ENCODE measurements at regions of chr5 and their contacts with region 1.

Region 1: GRCh38 chr5:35926389-35927051 is 11.9 kb downstream of the CAPSL start:
- DNase-seq: peak; percentile 84
- ATAC-seq: peak; percentile 61
- H3K4me3 ChIP-seq: peak overlapping the region; percentile 57
- H3K27ac ChIP-seq: no peak overlapping the region
- H3K4me1 ChIP-seq: peaks cover 30% of the 10 kb centered on the region
- H3K27me3 ChIP-seq: peaks cover 9% of the 10 kb centered on the region
- CTCF ChIP-seq: peak; percentile 97

Region 2: GRCh38 chr5:35213611-35214010 is 712.9 kb before region 1 on chr5:
- CTCF ChIA-PET with region 1: no interaction called
- POLR2A ChIA-PET with region 1: no interaction called
- intact Hi-C with region 1: no loop called
- DNase-seq: peak; percentile 85
- ATAC-seq: peak; percentile 60
- H3K4me3 ChIP-seq: no peak overlapping the region
- H3K27ac ChIP-seq: peak overlapping the region; percentile 73
- H3K4me1 ChIP-seq: peaks cover 20% of the 10 kb centered on the region
- H3K27me3 ChIP-seq: peaks cover 25% of the 10 kb centered on the region
- CTCF ChIP-seq: peak; percentile 66

Region 3: GRCh38 chr5:35478856-35479682 is 447.5 kb before region 1 on chr5:
- CTCF ChIA-PET with region 1: no interaction called
- POLR2A ChIA-PET with region 1: no interaction called
- intact Hi-C with region 1: loop called (anchors 1 kb)
- DNase-seq: peak; percentile 36
- ATAC-seq: peak; percentile 73
- H3K4me3 ChIP-seq: peak overlapping the region; percentile 70
- H3K27ac ChIP-seq: no peak overlapping the region
- H3K4me1 ChIP-seq: no peaks in the 10 kb centered on the region; the same call in 1 of the 2 replicates
- H3K27me3 ChIP-seq: peaks cover 18% of the 10 kb centered on the region
- CTCF ChIP-seq: no peak

Region 4: DNA sequence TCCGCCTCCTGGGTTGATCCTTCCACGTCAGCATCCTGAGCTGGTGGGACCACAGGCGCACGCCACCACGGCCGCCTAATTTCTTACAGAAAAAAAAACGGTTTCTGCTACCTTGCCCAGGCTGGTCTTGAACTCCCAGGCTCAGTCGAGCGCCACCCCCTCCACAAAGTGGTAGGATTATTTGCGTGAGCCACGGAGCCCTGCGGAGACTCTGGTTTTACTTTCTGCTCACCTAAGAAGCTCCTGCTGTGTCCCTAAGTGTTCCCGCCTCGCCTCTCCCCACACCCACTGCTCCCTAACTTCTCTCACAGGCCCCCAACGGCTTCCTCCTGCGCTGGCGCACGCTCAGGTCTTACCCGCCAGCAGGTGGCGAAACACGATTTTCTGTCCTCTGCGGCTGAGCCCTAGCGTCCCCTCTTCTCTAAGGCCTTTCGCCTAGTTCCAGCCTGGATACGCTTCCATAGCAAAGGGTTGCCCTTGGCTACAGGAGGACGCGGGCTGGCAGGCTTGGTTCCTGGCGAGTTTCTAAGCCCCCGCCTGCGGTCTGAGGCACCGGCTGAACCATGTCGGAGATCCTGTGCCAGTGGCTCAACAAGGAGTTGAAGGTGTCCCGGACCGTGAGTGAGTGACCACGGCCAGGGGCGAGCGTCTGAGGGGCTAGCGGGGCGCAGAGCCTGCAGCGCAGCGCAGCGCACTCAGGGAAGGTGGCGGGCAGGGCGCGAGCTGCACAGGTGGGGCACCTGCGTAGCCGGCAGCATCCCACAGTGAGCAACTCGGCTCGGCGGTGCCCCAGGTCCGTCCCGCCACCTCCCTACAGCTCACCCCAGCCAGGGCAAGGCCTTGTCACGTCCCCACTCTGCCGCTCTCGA is 308.9 kb before region 1 on chr5 and contains the start of gene SPEF2:
- CTCF ChIA-PET with region 1: interaction called, 3 read pairs
- POLR2A ChIA-PET with region 1: interaction called, 5 read pairs
- intact Hi-C with region 1: loop called (anchors 1 kb)
- DNase-seq: peak; percentile 92
- ATAC-seq: peak; percentile 98
- H3K4me3 ChIP-seq: peak within 1 kb of the TSS; percentile 92
- H3K27ac ChIP-seq: no peak within 1 kb of the TSS
- H3K4me1 ChIP-seq: peaks cover 9% of the 10 kb centered on the region
- H3K27me3 ChIP-seq: no peaks in the 10 kb centered on the region
- CTCF ChIP-seq: peak; percentile 91
- total RNA-seq, gene SPEF2: 2.3 and 2.7 TPM in 2 replicates

Region 5: GRCh38 chr5:35717718-35718117 is 208.8 kb before region 1 on chr5:
- CTCF ChIA-PET with region 1: no interaction called
- POLR2A ChIA-PET with region 1: no interaction called
- intact Hi-C with region 1: loop called (anchors 1 kb)
- DNase-seq: no peak
- ATAC-seq: no peak
- H3K4me3 ChIP-seq: no peak overlapping the region
- H3K27ac ChIP-seq: no peak overlapping the region
- H3K4me1 ChIP-seq: no peaks in the 10 kb centered on the region
- H3K27me3 ChIP-seq: no peaks in the 10 kb centered on the region
- CTCF ChIP-seq: no peak

Region 6: DNA sequence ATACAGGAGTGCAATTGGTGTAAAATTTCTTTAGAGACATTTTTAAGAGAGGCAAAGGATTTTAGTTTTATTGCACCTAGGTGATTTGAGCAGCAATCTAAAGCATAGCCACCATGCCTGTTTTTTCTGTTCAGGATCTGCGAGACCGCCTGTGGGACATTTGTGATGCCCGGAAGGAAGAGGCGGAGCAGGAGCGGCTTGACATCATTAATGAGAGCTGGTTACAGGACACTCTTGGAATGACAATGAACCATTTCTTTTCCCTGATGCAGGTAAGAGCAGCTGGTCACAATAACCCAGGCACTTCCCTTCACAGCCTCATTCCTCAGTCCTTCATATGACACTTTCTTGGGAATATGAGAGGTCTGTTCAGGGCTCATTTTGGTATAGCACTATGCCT is 173.0 kb before region 1 on chr5:
- CTCF ChIA-PET with region 1: no interaction called
- POLR2A ChIA-PET with region 1: no interaction called
- intact Hi-C with region 1: no loop called
- DNase-seq: no peak
- ATAC-seq: no peak
- H3K4me3 ChIP-seq: no peak overlapping the region
- H3K27ac ChIP-seq: no peak overlapping the region
- H3K4me1 ChIP-seq: no peaks in the 10 kb centered on the region
- H3K27me3 ChIP-seq: no peaks in the 10 kb centered on the region
- CTCF ChIP-seq: no peak

Region 7: GRCh38 chr5:35838370-35839042 is 88.0 kb before region 1 on chr5:
- CTCF ChIA-PET with region 1: no interaction called
- POLR2A ChIA-PET with region 1: no interaction called
- intact Hi-C with region 1: no loop called
- DNase-seq: peak; percentile 46
- ATAC-seq: peak; percentile 59; the same call in 1 of the 2 replicates
- H3K4me3 ChIP-seq: no peak overlapping the region
- H3K27ac ChIP-seq: no peak overlapping the region
- H3K4me1 ChIP-seq: peaks cover 7% of the 10 kb centered on the region
- H3K27me3 ChIP-seq: no peaks in the 10 kb centered on the region
- CTCF ChIP-seq: no peak

Region 8: DNA sequence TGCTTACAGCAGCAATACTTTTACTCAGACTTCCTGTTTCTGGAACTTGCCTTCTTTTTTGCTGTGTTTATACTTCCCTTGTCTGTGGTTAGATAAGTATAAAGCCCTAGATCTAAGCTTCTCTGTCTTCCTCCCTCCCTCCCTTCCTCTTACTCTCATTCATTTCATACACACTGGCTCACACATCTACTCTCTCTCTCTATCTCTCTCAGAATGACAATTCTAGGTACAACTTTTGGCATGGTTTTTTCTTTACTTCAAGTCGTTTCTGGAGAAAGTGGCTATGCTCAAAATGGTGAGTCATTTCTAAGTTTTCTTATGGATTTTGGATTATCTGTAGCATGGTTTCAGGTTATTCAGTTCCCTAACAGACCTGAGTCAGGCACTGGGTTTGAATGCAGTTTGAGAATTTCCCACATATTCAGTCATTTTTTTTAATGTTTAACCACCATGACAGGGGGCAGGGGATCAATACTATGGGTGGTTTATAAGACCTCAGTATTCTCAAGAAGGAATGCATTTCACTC is 69.7 kb before region 1 on chr5 and contains the start of gene IL7R:
- CTCF ChIA-PET with region 1: interaction called, 3 read pairs
- POLR2A ChIA-PET with region 1: interaction called, 3 read pairs
- intact Hi-C with region 1: loop called (anchors 1 kb)
- DNase-seq: peak; percentile 54
- ATAC-seq: peak; percentile 37
- H3K4me3 ChIP-seq: peak within 1 kb of the TSS; percentile 54
- H3K27ac ChIP-seq: peak within 1 kb of the TSS; percentile 91
- H3K4me1 ChIP-seq: peaks cover 65% of the 10 kb centered on the region
- H3K27me3 ChIP-seq: no peaks in the 10 kb centered on the region
- CTCF ChIP-seq: no peak
- total RNA-seq, gene IL7R: 7.1 and 7.4 TPM in 2 replicates